CD4-positive, alpha-beta memory T cell (primary cell): ENCODE measurements at regions of chr7 and their contacts with region 1.

Region 1: GRCh38 chr7:23273141-23273599 is 26.0 kb upstream of the MALSU1 start:
- DNase-seq: peak; percentile 77 to 90 (median 80)
- H3K4me3 ChIP-seq: no peak overlapping the region
- H3K4me3 Mint-ChIP-seq: peak overlapping the region in 7 of 8 donors; percentile 24 to 69 (median 65)
- H3K27ac ChIP-seq: no peak overlapping the region
- H3K27ac Mint-ChIP-seq: peak overlapping the region in 3 of 7 donors; percentile 4 to 18 (median 12)
- H3K4me1 ChIP-seq: peaks cover 4% of the 10 kb centered on the region
- H3K4me1 Mint-ChIP-seq: peaks cover 0 to 15% (median 7%) of the 10 kb centered on the region in 4 donors
- H3K27me3 ChIP-seq: no peaks in the 10 kb centered on the region
- H3K27me3 Mint-ChIP-seq: peaks cover 0 to 6% of the 10 kb centered on the region in 2 donors

Region 2: GRCh38 chr7:23347682-23348180 is 74.6 kb after region 1 on chr7:
- CTCF ChIA-PET with region 1: interaction called, 19 read pairs
- POLR2A ChIA-PET with region 1: no interaction called
- intact Hi-C with region 1: no loop called
- DNase-seq: no peak
- H3K4me3 ChIP-seq: no peak overlapping the region
- H3K4me3 Mint-ChIP-seq: peak overlapping the region in 2 of 8 donors; percentile 63 to 83
- H3K27ac ChIP-seq: no peak overlapping the region
- H3K27ac Mint-ChIP-seq: no peak overlapping the region
- H3K4me1 ChIP-seq: peaks cover 14% of the 10 kb centered on the region
- H3K4me1 Mint-ChIP-seq: peaks cover 6 to 24% (median 15%) of the 10 kb centered on the region in 4 donors
- H3K27me3 ChIP-seq: no peaks in the 10 kb centered on the region
- H3K27me3 Mint-ChIP-seq: peaks cover 2 to 4% of the 10 kb centered on the region in 2 donors

Region 3: GRCh38 chr7:23357190-23358093 is 84.3 kb after region 1 on chr7:
- CTCF ChIA-PET with region 1: interaction called, 10 read pairs
- POLR2A ChIA-PET with region 1: no interaction called
- intact Hi-C with region 1: loop called (anchors 2 kb)
- DNase-seq: peak in 3 of 5 donors; percentile 4 to 12 (median 8)
- H3K4me3 ChIP-seq: no peak overlapping the region
- H3K4me3 Mint-ChIP-seq: peak overlapping the region in 2 of 8 donors; percentile 28 to 43
- H3K27ac ChIP-seq: no peak overlapping the region
- H3K27ac Mint-ChIP-seq: peak overlapping the region in 1 of 7 donors; percentile 22
- H3K4me1 ChIP-seq: peaks cover 25% of the 10 kb centered on the region
- H3K4me1 Mint-ChIP-seq: peaks cover 8 to 18% (median 9%) of the 10 kb centered on the region in 4 donors
- H3K27me3 ChIP-seq: no peaks in the 10 kb centered on the region
- H3K27me3 Mint-ChIP-seq: peaks cover 7 to 8% of the 10 kb centered on the region in 2 donors

Region 4: DNA sequence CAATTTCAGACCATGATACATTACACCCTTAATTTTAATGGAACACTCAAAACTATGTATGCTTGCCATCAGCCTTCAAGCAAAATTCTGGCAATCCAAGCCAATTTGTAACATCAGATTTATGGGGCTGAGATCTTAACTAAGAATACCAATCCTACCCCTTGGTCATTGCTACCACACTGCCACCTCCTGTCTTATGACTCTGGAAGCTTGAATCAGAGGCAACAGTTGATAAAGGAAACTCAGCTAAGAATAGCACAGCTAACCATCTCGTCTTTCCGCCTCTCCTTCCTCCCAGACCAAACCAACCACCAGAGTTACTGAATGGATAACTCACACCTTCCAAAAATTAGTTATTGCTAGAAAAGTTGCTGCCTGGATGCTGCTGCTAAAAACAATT is 189.7 kb after region 1 on chr7:
- CTCF ChIA-PET with region 1: interaction called, 16 read pairs
- POLR2A ChIA-PET with region 1: interaction called, 3 read pairs
- intact Hi-C with region 1: loop called (anchors 1 kb)
- DNase-seq: no peak
- H3K4me3 ChIP-seq: no peak overlapping the region
- H3K4me3 Mint-ChIP-seq: no peak overlapping the region
- H3K27ac ChIP-seq: no peak overlapping the region
- H3K27ac Mint-ChIP-seq: no peak overlapping the region
- H3K4me1 ChIP-seq: peaks cover 4% of the 10 kb centered on the region
- H3K4me1 Mint-ChIP-seq: peaks cover 7 to 14% (median 7%) of the 10 kb centered on the region in 4 donors
- H3K27me3 ChIP-seq: peaks cover 18% of the 10 kb centered on the region
- H3K27me3 Mint-ChIP-seq: peaks cover 56 to 63% of the 10 kb centered on the region in 2 donors

Region 5: GRCh38 chr7:23539494-23539907 is 266.3 kb after region 1 on chr7:
- CTCF ChIA-PET with region 1: interaction called, 25 read pairs
- POLR2A ChIA-PET with region 1: no interaction called
- intact Hi-C with region 1: loop called (anchors 5 kb)
- DNase-seq: peak in 3 of 5 donors; percentile 40 to 42 (median 41)
- H3K4me3 ChIP-seq: peak overlapping the region in 1 of 2 donors; percentile 18
- H3K4me3 Mint-ChIP-seq: peak overlapping the region; percentile 51 to 85 (median 76)
- H3K27ac ChIP-seq: peak overlapping the region; percentile 36
- H3K27ac Mint-ChIP-seq: peak overlapping the region; percentile 65 to 90 (median 84)
- H3K4me1 ChIP-seq: peaks cover 22% of the 10 kb centered on the region
- H3K4me1 Mint-ChIP-seq: peaks cover 12 to 16% (median 14%) of the 10 kb centered on the region in 4 donors
- H3K27me3 ChIP-seq: no peaks in the 10 kb centered on the region
- H3K27me3 Mint-ChIP-seq: no peaks in the 10 kb centered on the region